Vagina (tissue), 2 donors: ENCODE measurements at regions of chr6 and their contacts with region 1.

Region 1: DNA sequence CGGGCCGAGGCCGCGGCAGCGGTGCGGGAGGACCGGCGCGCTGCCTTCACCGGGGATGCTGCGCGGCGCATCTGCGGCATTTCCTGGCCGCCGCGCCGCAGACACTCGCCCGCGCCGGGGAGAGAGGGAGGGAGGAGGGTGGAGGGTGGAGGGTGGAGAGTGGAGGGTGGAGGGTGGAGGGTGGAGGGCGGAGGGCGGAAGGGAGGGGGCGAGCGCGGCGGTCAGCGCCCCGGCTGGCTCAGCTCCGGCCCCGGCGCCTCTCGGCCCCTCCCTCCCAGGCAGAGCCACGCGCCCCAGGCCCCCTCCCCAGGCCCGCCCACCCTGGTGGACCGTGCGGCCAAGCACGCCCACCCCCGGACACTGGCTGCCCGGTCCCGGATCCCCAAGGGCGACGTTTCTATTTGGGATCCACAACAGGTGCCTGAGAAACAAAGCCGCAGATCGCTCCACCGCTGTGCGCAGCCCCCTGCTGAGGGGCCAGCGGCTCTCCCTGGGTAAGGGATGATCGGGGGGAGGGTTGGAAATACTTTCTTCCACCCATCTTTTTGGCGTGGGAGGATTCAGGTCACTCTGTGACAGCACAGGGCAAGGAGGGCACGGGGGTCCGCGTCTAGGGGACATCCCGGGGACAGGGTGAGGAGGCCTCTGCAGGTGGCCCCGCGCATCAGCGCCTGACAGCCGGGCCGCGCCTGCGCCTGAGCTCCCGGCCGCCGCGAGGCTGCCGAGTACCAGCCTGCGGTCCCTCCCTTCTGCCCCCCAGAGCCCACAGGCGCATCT is 111.1 kb upstream of the BEND6 start:
- DNase-seq: no peak
- H3K4me3 ChIP-seq: peak overlapping the region; percentile 55 to 66
- H3K27ac ChIP-seq: peak overlapping the region; percentile 94
- H3K4me1 ChIP-seq: peaks cover 8% of the 10 kb centered on the region
- H3K27me3 ChIP-seq: no peaks in the 10 kb centered on the region
- CTCF ChIP-seq: no peak
- POLR2A ChIP-seq: no peak

Region 2: GRCh38 chr6:56708810-56709597 is 134.8 kb before region 1 on chr6:
- intact Hi-C with region 1: loop called (anchors 5 kb)
- DNase-seq: no peak
- H3K4me3 ChIP-seq: no peak overlapping the region
- H3K27ac ChIP-seq: peak overlapping the region; percentile 45
- H3K4me1 ChIP-seq: peaks cover 17% of the 10 kb centered on the region
- H3K27me3 ChIP-seq: no peaks in the 10 kb centered on the region
- CTCF ChIP-seq: peak in 2 of 3 experiments; percentile 23 to 55
- POLR2A ChIP-seq: no peak